ENCODE measurements at regions of chr6 and their contacts with region 1.

Region 1: GRCh38 chr6:136783495-136784270 is 8.6 kb downstream of the MAP3K5 start:
- DNase-seq: peak in 3 of 35 experiments; percentile 23 to 47 (median 40)
- ATAC-seq: peak in 3 of 4 experiments; percentile 37 to 46 (median 38)
- H3K4me3 ChIP-seq: no peak overlapping the region
- H3K4me3 Mint-ChIP-seq: peak overlapping the region; percentile 49 to 66 (median 62)
- H3K27ac ChIP-seq: no peak overlapping the region
- H3K27ac Mint-ChIP-seq: peak overlapping the region; percentile 52 to 93
- H3K4me1 ChIP-seq: peaks cover 18 to 60% of the 10 kb centered on the region in 2 experiments
- H3K4me1 Mint-ChIP-seq: peaks cover 76 to 82% (median 76%) of the 10 kb centered on the region in 3 donors
- H3K27me3 ChIP-seq: no peaks in the 10 kb centered on the region
- H3K27me3 Mint-ChIP-seq: no peaks in the 10 kb centered on the region

Region 2: GRCh38 chr6:136728976-136729515 is 54.6 kb before region 1 on chr6:
- CTCF ChIA-PET with region 1: no interaction called
- POLR2A ChIA-PET with region 1: interaction called in 1 of 2 experiments, 12 read pairs
- DNase-seq: no peak
- ATAC-seq: no peak
- H3K4me3 ChIP-seq: no peak overlapping the region
- H3K4me3 Mint-ChIP-seq: no peak overlapping the region
- H3K27ac ChIP-seq: no peak overlapping the region
- H3K27ac Mint-ChIP-seq: peak overlapping the region; percentile 11 to 50
- H3K4me1 ChIP-seq: peaks cover 0 to 3% of the 10 kb centered on the region in 2 experiments
- H3K4me1 Mint-ChIP-seq: peaks cover 21 to 66% (median 34%) of the 10 kb centered on the region in 3 donors
- H3K27me3 ChIP-seq: no peaks in the 10 kb centered on the region
- H3K27me3 Mint-ChIP-seq: no peaks in the 10 kb centered on the region

Region 3: GRCh38 chr6:136761227-136761922 is 22.3 kb before region 1 on chr6:
- CTCF ChIA-PET with region 1: interaction called in 1 of 2 experiments, 4 read pairs
- POLR2A ChIA-PET with region 1: interaction called in 1 of 2 experiments, 10 read pairs
- DNase-seq: peak in 9 of 35 experiments; percentile 5 to 56 (median 23)
- ATAC-seq: peak; percentile 55 to 72 (median 64)
- H3K4me3 ChIP-seq: peak overlapping the region in 1 of 2 donors; percentile 30
- H3K4me3 Mint-ChIP-seq: peak overlapping the region; percentile 59 to 82 (median 72)
- H3K27ac ChIP-seq: peak overlapping the region; percentile 84
- H3K27ac Mint-ChIP-seq: peak overlapping the region; percentile 93
- H3K4me1 ChIP-seq: peaks cover 17 to 65% of the 10 kb centered on the region in 2 experiments
- H3K4me1 Mint-ChIP-seq: peaks cover 60 to 78% (median 66%) of the 10 kb centered on the region in 3 donors
- H3K27me3 ChIP-seq: no peaks in the 10 kb centered on the region
- H3K27me3 Mint-ChIP-seq: no peaks in the 10 kb centered on the region

Measured in T-cell (primary cell).